GM10248 (cell line): ENCODE measurements at regions of chr17 and their contacts with region 1.

Region 1: DNA sequence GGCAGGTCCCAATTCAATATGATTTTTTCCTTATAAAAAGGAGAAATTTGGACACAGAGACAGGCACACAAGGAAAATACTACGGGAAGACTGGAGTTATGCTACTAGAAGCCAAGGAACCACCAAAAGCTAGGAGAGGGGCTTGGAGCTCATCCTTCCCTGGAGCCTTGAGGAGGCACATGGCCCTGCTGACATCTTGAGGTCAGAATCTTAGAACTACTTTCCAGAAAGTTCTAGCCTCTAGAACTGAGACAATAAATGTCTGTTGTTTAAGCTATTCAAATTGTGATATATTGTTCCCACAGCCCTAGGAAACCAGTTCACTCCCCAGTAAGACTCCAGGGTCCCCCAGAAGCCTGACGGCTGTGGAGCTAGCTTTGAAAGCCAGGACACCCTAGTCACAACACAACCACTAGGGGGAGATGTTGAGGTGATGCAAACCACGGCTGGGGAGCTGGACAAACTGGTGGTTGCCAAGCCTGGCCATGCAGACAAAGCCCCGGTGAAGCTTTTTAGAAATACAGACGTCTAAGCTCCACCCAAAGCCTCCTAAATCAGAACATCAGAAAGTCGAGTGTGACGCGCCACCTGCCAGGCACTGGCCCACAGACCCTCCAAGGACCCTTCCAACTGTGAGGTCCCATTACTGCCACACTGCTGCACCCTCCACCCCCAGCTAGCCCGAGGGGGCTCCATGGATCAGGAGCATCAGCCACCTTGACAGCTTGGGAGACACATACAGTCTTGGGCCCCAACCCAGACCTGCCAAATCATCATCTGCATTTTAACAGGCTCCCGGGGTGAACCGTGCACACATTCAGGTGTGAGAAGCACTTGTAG is 106.4 kb downstream of the SLC39A11 start:
- DNase-seq: peak; percentile 87
- CTCF ChIP-seq: peak; percentile 72

Region 2: GRCh38 chr17:72967977-72968585 is 18.0 kb before region 1 on chr17:
- CTCF ChIA-PET with region 1: interaction called, 17 read pairs
- POLR2A ChIA-PET with region 1: no interaction called
- DNase-seq: no peak
- CTCF ChIP-seq: no peak

Region 3: GRCh38 chr17:73007407-73007806 is 21.3 kb after region 1 on chr17:
- CTCF ChIA-PET with region 1: interaction called, 27 read pairs
- POLR2A ChIA-PET with region 1: no interaction called
- DNase-seq: no peak
- CTCF ChIP-seq: no peak

Region 4: GRCh38 chr17:73039282-73039681 is 53.2 kb after region 1 on chr17:
- CTCF ChIA-PET with region 1: interaction called, 11 read pairs
- POLR2A ChIA-PET with region 1: no interaction called
- DNase-seq: no peak
- CTCF ChIP-seq: no peak

Region 5: DNA sequence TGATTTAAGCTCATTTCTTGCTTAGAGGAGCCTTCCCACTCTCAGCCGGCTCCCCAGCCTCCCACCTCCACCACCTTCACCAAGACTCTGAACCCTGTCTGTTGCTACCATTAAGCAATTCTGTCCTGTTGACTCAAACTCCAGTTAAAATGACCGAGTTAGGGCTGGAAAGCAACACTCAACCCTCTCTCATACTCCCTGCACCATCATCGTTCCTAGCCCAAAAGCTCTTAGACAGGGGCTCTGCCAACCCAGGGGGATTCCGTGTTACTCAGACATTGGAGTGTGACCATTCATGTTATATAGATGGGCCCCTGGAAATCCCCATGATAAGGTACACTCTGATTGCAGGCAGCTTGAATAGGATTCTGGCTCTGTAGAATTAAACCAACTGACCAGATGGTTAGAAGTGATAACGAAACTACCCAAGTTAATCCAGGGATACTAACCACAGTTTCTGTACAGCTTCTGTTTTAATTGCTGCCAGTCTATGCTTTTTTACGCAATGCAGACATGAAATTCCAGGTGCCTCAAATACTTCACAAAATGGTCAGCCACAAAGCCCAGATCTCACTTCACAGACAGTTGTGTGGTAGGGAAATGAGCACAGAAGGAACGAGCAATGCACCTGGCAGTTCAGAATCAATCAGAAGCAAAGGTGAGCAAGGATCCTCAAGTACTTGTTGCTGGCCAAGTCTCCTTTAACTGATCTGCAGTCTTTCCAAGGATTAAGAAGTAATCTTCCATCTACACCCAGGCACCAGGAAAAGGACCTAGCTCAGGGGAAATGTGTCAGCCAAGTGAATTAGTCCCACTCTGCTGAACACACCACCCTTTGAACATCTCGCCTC is 180.9 kb after region 1 on chr17:
- CTCF ChIA-PET with region 1: interaction called, 12 read pairs
- POLR2A ChIA-PET with region 1: no interaction called
- DNase-seq: peak; percentile 30
- CTCF ChIP-seq: no peak